Ovary (tissue), 10 donors: ENCODE measurements at regions of chr1 and their contacts with region 1.

Region 1: DNA sequence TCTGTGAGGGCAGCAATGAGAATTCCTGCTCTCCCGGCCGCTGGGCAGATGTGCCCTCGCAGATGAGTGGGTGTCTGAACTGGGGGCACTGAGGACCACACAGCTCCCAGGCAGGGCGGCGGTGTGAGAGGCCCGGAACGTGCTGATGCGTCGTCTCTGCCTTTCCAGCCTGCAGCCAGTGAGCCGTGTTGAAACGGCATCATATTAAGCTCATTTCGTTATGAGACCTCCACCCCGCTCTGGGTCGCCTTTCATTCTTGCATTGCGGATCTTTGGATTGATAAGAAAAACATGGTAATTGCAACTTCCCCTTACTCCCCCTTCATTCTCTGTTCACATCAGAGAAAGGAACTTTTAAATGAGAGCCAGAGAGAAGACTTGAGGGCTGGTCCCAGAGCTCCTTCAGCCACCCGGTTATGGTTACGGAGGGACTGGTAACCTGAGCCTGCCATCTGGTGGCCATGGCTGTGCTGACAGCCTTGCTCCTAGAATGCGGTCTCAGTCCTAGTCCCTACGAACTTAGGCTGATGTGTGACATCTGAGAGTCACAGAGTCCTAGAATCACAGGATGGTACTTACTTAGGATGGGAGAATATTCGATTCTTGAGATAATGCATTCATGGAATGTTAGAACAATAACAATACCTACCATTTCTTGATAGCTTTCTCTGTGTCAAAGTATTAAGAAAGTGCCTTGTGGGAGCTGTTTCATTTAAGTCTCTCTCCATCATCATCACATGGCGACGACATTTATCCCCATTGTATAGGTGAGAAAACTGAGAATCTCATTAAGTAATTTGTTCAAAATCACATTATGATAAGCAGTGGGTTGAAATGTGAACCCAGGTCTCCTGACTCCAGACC is 271.0 kb downstream of the TRABD2B start:
- DNase-seq: peak; percentile 29 to 70 (median 56)
- H3K4me3 ChIP-seq: no peak overlapping the region
- H3K27ac ChIP-seq: no peak overlapping the region
- H3K4me1 ChIP-seq: peaks cover 3% of the 10 kb centered on the region
- H3K27me3 ChIP-seq: no peaks in the 10 kb centered on the region
- CTCF ChIP-seq: peak in 2 of 3 donors; percentile 32 to 40
- EP300 ChIP-seq: no peak
- POLR2A ChIP-seq: no peak

Region 2: DNA sequence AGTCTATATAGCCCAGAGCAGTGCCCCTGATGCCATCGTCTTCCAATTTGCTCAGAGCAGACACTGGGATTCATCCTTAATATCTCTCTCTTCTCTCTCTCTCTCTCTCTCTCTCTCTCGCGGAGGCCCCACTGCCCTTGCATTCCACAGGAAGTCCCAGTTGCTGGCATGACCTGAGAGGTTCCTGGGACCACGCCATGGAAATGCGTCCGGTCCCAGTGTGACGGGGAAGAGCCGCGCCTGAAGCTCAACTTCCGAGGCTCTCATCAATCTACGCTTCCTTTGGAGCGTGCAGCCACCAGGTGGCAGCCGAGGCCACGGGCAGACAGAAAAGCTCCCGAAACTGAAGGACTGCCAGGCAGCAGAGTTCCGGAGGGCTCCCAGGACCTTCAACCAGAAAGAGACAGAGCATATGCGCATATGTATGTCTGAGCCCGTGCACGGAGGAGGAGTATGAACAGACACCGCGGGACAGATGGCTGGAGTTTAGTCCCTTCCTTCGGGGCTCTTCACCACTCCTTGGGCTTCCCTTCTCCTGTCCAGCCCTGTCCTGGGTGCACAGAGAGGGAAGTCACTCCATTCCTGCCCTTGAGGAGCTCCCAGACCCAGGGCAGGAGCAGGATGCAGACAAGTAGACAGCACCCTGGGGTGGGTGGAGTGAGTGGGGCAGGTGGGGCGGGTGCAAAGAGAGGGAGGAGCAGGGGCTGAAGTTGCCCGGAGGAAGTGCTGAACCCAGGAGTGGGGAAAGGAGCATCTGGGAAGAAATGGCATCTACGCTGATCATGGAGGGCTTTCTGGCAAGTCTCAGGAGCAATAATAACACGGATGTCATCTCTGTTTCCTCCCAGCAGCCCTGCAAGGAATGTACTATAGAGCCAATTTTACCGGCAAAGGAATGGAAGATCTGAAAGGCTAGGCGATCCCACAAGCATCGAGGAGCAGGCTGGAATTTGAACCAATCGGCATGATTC is 546.9 kb before region 1 on chr1:
- intact Hi-C with region 1: loop called (anchors 5 to 10 kb)
- DNase-seq: peak; percentile 72 to 90 (median 80)
- H3K4me3 ChIP-seq: peak overlapping the region; percentile 19
- H3K27ac ChIP-seq: no peak overlapping the region
- H3K4me1 ChIP-seq: no peaks in the 10 kb centered on the region
- H3K27me3 ChIP-seq: no peaks in the 10 kb centered on the region
- CTCF ChIP-seq: peak; percentile 47 to 74 (median 62)
- EP300 ChIP-seq: no peak
- POLR2A ChIP-seq: no peak

Region 3: DNA sequence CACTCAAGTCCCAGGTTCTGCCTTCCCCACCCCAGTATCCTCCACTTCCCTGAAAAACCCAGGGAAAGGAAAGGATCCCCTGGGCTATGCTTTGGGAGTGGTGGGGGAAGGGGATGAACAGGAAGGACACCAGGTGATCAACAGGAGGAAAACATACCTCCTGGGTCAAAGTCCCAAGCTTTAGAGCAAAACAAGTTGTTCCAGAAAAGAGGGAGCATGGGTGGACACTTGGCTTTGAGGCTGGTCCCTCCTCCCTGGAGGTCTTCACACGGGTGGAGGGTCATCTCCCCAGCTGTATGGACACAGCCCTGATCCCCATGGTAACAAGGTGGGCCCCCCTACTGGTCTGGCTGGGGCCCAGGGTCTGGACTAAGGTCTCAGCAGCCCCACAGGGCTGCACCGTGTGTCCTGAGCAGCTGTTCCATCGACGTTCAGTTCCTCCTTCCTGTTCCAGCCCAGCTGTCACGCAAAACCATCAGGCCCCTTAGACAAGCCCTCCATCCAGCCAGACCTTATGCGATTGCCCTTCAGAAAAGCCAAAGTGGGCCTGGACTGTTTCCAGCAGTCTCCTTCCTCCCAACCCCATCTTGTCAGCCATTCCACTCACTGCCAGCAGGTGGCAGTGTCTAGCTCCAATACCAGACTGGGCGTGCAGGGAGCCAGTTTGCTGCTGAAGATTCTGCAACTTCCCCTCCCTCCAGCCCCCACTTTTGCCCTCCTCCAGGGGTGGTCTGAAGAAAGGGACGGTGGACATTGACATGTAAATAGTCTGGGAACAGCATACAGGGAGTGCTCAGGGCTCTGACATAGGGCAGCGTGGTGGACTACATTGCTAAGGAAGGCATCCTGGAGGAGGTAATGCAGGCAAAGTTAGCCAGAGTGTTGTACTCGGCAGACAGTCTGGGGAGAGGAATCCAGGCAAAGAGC is 533.5 kb before region 1 on chr1:
- intact Hi-C with region 1: loop called in 2 of 4 experiments (anchors 10 kb)
- DNase-seq: peak; percentile 57 to 79 (median 73)
- H3K4me3 ChIP-seq: no peak overlapping the region
- H3K27ac ChIP-seq: no peak overlapping the region
- H3K4me1 ChIP-seq: peaks cover 12% of the 10 kb centered on the region
- H3K27me3 ChIP-seq: no peaks in the 10 kb centered on the region
- CTCF ChIP-seq: peak; percentile 37 to 78 (median 54)
- EP300 ChIP-seq: no peak
- POLR2A ChIP-seq: no peak

Region 4: GRCh38 chr1:47432071-47433036 is 293.9 kb before region 1 on chr1:
- intact Hi-C with region 1: loop called (anchors 5 to 10 kb)
- DNase-seq: peak; percentile 21 to 68 (median 43)
- H3K4me3 ChIP-seq: no peak overlapping the region
- H3K27ac ChIP-seq: no peak overlapping the region
- H3K4me1 ChIP-seq: peaks cover 3% of the 10 kb centered on the region
- H3K27me3 ChIP-seq: no peaks in the 10 kb centered on the region
- CTCF ChIP-seq: peak in 1 of 3 donors; percentile 9
- EP300 ChIP-seq: no peak
- POLR2A ChIP-seq: no peak

Region 5: GRCh38 chr1:47437447-47438164 is 288.6 kb before region 1 on chr1 and contains the start of gene FOXD2:
- intact Hi-C with region 1: loop called (anchors 5 to 10 kb)
- DNase-seq: peak; percentile 62 to 81 (median 70)
- H3K4me3 ChIP-seq: peak within 1 kb of the TSS; percentile 65
- H3K27ac ChIP-seq: no peak within 1 kb of the TSS
- H3K4me1 ChIP-seq: peaks cover 6% of the 10 kb centered on the region
- H3K27me3 ChIP-seq: no peaks in the 10 kb centered on the region
- CTCF ChIP-seq: peak; percentile 72 to 90 (median 78)
- EP300 ChIP-seq: no peak
- POLR2A ChIP-seq: no peak
- total RNA-seq, gene FOXD2: 0.07 to 0.18 (median 0.09) TPM in 4 of 7 donors, not detected in the others

Region 6: DNA sequence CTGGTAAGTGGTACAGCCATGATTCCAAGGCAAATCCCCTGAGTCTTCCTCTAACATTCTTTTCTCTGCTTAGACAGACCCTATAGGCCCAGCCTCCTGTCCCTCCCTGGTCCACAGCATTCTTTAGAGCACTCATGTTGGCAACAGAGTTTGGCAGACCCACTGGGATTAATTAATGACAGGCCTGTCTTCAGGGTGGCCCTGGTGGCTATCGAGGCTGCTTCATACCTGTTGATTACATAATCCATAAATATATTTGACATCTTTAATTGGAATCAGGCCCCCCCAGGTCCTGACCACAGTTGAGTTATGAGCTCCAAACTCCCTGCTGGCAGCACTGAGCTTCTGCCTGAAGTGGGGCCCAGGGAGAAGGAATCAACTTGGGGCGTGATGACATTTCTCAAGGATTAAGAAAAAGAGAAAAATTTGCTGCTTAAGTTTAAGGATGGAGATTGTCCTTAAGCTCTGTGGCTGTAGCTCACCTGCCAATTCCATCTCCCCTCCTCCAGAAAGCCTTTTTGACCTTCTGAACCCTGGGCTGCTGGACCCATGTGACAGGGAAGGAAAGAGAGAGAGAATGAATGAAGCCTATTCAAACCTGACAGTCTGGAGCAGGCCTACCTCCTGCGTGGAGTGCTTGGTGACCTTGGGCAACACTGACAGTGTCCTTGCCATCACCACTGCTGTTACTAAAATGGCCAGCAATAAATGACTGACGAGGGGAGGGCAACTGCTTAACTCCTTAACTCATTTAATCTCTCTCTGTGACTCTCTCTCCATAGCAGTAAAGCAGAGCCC is 114.4 kb after region 1 on chr1:
- intact Hi-C with region 1: no loop called
- DNase-seq: no peak
- H3K4me3 ChIP-seq: no peak overlapping the region
- H3K27ac ChIP-seq: no peak overlapping the region
- H3K4me1 ChIP-seq: no peaks in the 10 kb centered on the region
- H3K27me3 ChIP-seq: no peaks in the 10 kb centered on the region
- CTCF ChIP-seq: no peak
- EP300 ChIP-seq: no peak
- POLR2A ChIP-seq: no peak